ENCODE measurements at regions of chr6 and their contacts with region 1.

Region 1: DNA sequence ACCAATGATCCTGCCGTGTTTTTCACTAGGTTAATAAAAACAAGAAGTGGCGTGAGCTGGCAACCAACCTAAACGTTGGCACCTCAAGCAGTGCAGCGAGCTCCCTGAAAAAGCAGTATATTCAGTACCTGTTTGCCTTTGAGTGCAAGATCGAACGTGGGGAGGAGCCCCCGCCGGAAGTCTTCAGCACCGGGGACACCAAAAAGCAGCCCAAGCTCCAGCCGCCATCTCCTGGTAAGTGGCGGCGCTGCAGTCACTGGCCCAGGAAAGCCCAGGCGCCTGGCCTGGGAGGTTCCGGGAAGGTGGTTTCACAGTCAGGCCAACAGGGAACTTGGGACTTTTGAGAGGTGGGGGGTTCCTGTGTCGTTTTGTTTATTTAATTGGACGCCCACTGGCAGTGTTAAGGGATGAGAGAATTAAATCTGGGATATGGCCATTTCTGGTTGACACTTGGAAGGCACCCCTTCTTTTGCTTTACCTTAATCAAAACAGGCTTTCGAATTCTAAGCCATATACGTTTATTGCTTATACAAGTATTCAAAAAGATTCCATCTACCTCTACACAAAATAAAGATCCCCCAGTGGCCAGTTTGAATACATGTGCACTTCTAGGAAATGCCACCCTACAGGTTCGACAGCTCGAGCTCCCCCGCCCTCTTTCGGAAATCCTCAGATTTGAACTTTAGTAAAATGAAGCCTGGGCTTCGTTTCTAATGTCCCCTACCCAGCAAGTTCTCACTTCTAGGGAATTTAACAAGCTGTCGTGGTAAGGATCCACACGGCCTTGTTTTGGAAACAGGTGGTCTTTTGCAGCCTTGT is 138.9 kb downstream of the TMEM242 start:
- DNase-seq: no peak
- H3K4me3 ChIP-seq: peak overlapping the region in 1 of 4 donors; percentile 40
- H3K27ac ChIP-seq: peak overlapping the region in 3 of 4 donors; percentile 69 to 85 (median 72)
- H3K4me1 ChIP-seq: peaks cover 10 to 54% (median 15%) of the 10 kb centered on the region in 3 donors
- H3K27me3 ChIP-seq: no peaks in the 10 kb centered on the region
- CTCF ChIP-seq: peak; percentile 76 to 96 (median 92)
- POLR2A ChIP-seq: no peak

Region 2: GRCh38 chr6:157045831-157046454 is 138.5 kb before region 1 on chr6:
- intact Hi-C with region 1: loop called (anchors 10 kb)
- DNase-seq: no peak
- H3K4me3 ChIP-seq: no peak overlapping the region
- H3K27ac ChIP-seq: no peak overlapping the region
- H3K4me1 ChIP-seq: peaks cover 0 to 19% (median 0%) of the 10 kb centered on the region in 3 donors
- H3K27me3 ChIP-seq: no peaks in the 10 kb centered on the region
- CTCF ChIP-seq: peak in 4 of 6 experiments; percentile 42 to 66 (median 60)
- POLR2A ChIP-seq: no peak

Region 3: DNA sequence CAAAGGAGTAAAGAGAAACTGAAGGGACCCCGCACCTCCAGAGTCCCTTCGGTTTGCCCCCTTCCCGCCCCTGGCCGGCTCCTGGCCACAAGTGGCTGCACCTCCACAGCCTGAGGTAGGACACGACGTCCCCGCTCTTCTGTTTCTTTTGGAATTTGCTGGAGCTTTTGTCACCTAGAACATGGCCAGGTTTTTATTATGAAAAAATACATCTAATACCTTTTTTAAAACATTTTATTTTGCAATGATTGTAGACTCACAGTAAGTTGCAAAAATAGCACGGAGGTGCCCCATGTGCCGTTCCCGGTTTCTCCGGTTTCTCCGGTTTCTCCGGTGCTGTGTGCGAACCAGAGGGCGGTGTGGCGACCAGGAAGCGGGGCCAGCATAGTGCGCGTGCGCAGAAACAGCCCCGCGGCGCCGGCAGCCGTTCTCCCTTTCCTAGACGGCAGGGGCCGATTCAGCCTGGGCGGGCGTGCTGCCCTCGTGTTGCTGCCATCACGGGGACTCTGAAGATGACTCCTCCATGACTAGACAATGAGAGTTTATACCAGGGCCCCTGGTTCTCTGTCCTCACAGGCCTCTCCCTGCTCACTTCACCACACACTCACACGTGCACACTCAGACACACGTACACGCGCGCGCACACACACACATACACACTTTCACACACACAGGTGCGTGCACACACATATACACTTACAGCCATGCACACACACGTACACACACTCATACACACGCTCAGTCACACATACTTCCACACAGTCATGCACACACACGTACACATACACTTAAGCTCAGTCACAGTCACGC is 36.8 kb after region 1 on chr6:
- intact Hi-C with region 1: no loop called
- DNase-seq: no peak
- H3K4me3 ChIP-seq: peak overlapping the region in 3 of 4 donors; percentile 38 to 59 (median 43)
- H3K27ac ChIP-seq: peak overlapping the region; percentile 29 to 76 (median 57)
- H3K4me1 ChIP-seq: peaks cover 13 to 59% (median 29%) of the 10 kb centered on the region in 3 donors
- H3K27me3 ChIP-seq: no peaks in the 10 kb centered on the region
- CTCF ChIP-seq: peak in 3 of 6 experiments; percentile 4 to 44 (median 18)
- POLR2A ChIP-seq: no peak

Measured in esophagus squamous epithelium (tissue), 5 donors.